Dendritic cell treated with granulocyte-macrophage colony-stimulating factor and Interleukin-4, amounts not matched to agents 40 ng/mL and 50 ng/mL, for 4 days (primary cell): ENCODE measurements at regions of chr5 and their contacts with region 1.

Region 1: DNA sequence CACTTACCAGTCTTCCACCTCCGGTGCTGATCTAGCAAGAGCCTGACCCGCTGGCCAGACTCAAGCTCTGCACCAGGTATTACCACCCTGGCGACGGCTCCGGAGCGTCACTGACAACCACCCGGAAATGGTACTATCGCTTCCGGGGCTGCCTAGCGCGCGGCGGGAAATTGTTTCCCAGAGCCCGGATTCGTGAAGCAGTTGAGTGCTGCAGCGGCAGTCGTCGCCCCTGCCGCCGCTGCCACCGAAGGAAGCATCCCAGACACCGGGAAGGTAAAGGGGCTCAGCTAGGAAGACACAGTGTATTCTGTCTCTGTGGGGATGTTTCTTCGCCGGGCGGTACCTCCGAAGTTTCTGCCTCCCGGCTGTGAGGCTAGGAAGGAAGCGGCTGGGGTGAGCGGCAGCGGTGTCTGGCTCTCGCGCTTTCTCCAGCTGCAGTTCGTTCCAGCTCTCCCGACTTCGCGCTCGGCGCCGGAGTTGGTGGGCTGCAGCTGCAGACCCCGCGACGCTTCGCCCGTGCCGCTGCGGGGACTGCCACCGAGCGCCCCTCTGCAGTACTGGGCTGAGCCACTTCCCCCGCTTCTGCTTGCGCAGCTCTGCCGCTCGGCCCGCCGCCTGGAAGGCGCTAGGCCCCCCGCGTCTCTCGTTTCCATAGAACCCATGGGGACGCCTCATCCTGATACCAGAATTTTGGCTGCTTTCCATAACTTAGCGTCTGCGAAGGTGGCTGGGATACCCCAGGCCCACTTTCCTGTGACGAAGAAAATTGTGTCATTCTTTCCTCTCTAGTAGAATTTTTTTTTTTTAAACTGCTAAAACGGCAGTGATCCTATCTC is at the starts of genes KIAA0825 and SLF1:
- H3K4me3 Mint-ChIP-seq: peak within 1 kb of the TSS; percentile 89
- H3K27ac Mint-ChIP-seq: peak within 1 kb of the TSS; percentile 90
- H3K4me1 Mint-ChIP-seq: peaks cover 27% of the 10 kb centered on the region
- H3K27me3 Mint-ChIP-seq: no peaks in the 10 kb centered on the region

Region 2: DNA sequence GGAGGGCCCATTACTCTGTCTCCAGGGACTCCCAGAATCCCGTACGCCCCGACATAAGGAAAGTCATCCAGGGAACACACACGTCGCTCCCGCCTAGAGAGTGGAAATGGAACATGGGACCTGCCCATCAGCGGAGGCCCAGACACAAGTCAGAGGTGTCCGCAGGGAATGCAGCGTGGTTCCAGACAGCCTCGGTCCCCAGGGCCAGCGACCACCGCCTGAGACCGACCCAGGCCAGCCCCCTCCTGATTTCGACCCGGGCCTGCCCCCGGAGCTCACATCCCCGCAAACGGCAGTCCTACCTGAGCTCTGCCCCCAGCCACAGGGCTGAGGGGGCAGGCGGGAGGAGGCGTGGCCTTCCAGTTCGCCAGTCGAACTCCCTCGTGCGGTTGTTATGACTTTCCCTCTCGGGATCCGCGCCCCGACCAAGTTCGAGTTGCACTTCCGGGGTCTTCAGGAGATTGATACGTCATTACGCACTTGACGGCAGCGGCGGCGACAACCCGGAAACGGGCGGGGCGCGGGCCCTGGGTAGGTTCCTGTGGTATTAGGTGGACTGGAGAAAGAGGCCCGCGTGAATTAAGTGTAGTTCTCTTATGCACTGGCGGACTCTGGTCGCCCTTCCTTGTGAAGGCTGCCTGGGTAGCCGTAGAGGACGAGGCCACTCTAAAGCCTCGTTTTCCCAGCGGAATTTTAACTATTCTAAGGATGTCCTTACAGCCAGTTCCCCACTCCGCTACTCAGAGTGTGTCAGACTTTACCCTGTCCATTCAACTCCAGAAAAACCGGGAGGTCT is 507.3 kb before region 1 on chr5:
- intact Hi-C with region 1: loop called (anchors 10 kb)
- H3K4me3 Mint-ChIP-seq: peak overlapping the region; percentile 96
- H3K27ac Mint-ChIP-seq: peak overlapping the region; percentile 96
- H3K4me1 Mint-ChIP-seq: peaks cover 38% of the 10 kb centered on the region
- H3K27me3 Mint-ChIP-seq: peaks cover 8% of the 10 kb centered on the region

Region 3: GRCh38 chr5:94316916-94317838 is 301.5 kb before region 1 on chr5:
- intact Hi-C with region 1: no loop called
- H3K4me3 Mint-ChIP-seq: no peak overlapping the region
- H3K27ac Mint-ChIP-seq: no peak overlapping the region
- H3K4me1 Mint-ChIP-seq: no peaks in the 10 kb centered on the region
- H3K27me3 Mint-ChIP-seq: no peaks in the 10 kb centered on the region

Region 4: DNA sequence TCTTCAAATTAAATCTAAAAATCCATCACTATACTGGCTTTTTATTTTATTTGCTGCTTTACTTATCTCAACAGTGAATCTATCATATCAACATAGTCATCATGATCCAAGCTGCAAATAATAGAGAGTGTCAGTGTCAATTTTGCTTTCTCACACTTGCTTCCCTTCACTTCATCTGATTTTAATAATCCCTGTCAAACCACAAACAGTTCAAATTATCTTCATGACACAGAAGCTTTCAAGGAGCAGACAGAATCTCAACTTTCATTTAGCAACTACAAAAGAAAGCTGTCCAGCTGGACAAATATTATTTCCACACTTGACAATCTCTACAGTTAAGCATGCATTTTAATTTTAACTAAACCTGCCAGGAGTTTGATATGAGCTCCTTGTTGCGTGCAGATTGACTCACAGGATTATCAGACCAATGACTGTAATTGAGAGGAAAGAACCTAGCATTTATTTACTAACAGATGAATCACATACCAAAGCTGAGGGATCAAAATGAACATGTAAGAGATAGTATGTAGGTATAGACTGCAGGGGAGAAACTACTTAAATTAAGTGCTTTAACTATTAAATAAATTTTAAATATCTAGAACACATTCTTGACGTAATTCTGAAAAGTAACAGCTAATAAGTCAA is 56.3 kb before region 1 on chr5:
- intact Hi-C with region 1: no loop called
- H3K4me3 Mint-ChIP-seq: no peak overlapping the region
- H3K27ac Mint-ChIP-seq: no peak overlapping the region
- H3K4me1 Mint-ChIP-seq: no peaks in the 10 kb centered on the region
- H3K27me3 Mint-ChIP-seq: no peaks in the 10 kb centered on the region

Region 5: GRCh38 chr5:94731471-94731870 is 112.8 kb after region 1 on chr5:
- intact Hi-C with region 1: loop called (anchors 10 kb)
- H3K4me3 Mint-ChIP-seq: no peak overlapping the region
- H3K27ac Mint-ChIP-seq: no peak overlapping the region
- H3K4me1 Mint-ChIP-seq: peaks cover 11% of the 10 kb centered on the region
- H3K27me3 Mint-ChIP-seq: no peaks in the 10 kb centered on the region